Colonic mucosa (tissue), 4 donors: ENCODE measurements at regions of chr3 and their contacts with region 1.

Region 1: DNA sequence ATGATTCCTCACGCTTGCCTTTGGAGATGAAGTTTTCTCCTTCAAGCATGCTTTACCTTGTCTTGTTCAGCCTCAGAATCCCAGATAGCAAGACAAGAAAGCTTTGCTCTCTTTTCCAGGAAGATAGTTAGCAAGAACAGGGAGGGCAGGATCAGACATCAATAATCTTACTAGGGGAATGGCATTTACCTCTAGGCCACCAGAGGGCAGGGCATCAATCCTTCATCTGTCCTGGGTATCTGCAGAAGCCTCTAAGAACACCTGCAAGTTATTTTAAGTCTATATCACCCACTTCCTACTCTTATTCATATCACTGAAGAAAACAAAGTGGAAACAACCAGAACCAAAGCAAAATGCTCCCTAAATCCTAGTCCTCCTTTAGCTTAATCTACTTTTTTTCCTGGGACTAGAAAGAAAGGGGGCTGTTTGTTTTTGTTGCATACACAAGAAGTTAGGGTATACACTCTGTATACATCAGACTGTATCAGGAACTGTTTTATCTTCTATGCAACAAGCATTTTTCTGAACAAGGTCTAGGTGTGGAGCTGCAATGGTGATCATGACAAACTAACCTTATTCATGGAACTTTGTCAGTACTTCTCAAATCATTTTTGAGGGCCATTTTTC is 862.5 kb downstream of the CADM2 start:
- DNase-seq: peak; percentile 22
- H3K4me3 ChIP-seq: no peak overlapping the region
- H3K27ac ChIP-seq: no peak overlapping the region
- H3K4me1 ChIP-seq: no peaks in the 10 kb centered on the region
- H3K27me3 ChIP-seq: no peaks in the 10 kb centered on the region
- CTCF ChIP-seq: peak; percentile 37

Region 2: GRCh38 chr3:86245360-86245759 is 424.1 kb after region 1 on chr3:
- intact Hi-C with region 1: loop called (anchors 5 kb)
- DNase-seq: no peak
- H3K4me3 ChIP-seq: no peak overlapping the region
- H3K27ac ChIP-seq: no peak overlapping the region
- H3K4me1 ChIP-seq: no peaks in the 10 kb centered on the region
- H3K27me3 ChIP-seq: no peaks in the 10 kb centered on the region
- CTCF ChIP-seq: peak; percentile 30